ENCODE measurements at regions of chr7 and their contacts with region 1.

Region 1: DNA sequence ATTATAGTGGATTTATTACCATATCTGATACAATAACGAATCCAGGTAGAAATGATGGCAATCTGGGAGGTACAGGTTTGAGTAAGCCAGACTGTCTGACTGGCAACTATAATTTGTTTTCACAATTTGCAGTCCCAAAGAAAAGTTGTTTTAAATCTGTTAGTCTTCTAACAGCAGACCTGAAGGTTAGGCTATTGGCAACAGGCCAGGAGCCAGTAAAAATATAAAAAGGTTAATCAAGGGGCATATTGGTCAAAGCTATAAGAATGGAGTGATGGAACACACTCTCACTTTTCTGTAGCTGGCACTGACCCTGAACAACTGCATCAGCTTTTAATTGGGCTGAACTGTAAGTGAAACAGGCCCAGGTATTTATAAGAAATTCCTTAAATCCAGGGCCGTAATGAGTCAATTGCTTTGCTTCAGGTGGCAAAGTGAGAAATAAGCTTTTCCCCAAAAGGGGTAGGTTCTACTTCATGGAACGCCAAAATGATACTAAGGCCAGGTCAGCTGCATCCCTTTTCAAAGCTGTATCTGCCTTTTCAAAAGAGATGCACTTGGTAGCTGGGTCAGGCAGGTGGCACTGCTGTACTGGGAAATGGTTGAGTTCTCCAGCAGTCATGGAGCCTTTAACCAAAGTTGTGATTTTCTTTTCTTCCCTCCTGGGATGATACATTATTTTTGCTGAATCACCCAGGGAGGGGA is 7.0 kb upstream of the GPR22 start:
- DNase-seq: peak; percentile 8 to 32 (median 23)
- H3K4me3 ChIP-seq: no peak overlapping the region
- H3K4me3 Mint-ChIP-seq: no peak overlapping the region
- H3K27ac ChIP-seq: no peak overlapping the region
- H3K27ac Mint-ChIP-seq: no peak overlapping the region
- H3K4me1 ChIP-seq: no peaks in the 10 kb centered on the region
- H3K4me1 Mint-ChIP-seq: peaks cover 2% of the 10 kb centered on the region
- H3K27me3 ChIP-seq: no peaks in the 10 kb centered on the region
- H3K27me3 Mint-ChIP-seq: no peaks in the 10 kb centered on the region
- CTCF ChIP-seq: peak; percentile 46

Region 2: DNA sequence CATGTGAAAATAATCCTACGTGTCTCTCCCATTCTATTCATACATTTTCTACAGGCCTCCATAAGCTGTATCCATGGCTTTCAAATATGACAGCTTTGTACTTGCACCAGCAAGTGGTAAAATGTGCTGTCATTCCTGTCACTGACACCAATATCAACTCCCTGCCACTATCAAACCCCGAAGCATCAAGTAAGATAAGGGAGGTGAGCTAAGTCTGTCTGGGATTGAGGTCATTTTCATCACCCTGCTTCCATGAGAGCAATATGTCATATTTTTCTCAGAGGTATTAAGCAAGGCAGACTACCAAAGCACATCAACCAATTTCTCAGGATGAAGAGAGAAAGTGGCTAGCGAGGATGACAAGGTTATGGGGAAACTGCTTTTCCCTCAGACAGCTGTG is 18.0 kb after region 1 on chr7:
- intact Hi-C with region 1: no loop called
- DNase-seq: no peak
- H3K4me3 ChIP-seq: no peak overlapping the region
- H3K4me3 Mint-ChIP-seq: no peak overlapping the region
- H3K27ac ChIP-seq: no peak overlapping the region
- H3K27ac Mint-ChIP-seq: no peak overlapping the region
- H3K4me1 ChIP-seq: no peaks in the 10 kb centered on the region
- H3K4me1 Mint-ChIP-seq: peaks cover 3% of the 10 kb centered on the region
- H3K27me3 ChIP-seq: no peaks in the 10 kb centered on the region
- H3K27me3 Mint-ChIP-seq: no peaks in the 10 kb centered on the region
- CTCF ChIP-seq: no peak

Region 3: GRCh38 chr7:107725151-107725740 is 262.4 kb after region 1 on chr7:
- intact Hi-C with region 1: loop called in 1 of 2 experiments (anchors 5 kb)
- DNase-seq: peak; percentile 15 to 45 (median 37)
- H3K4me3 ChIP-seq: no peak overlapping the region
- H3K4me3 Mint-ChIP-seq: no peak overlapping the region
- H3K27ac ChIP-seq: no peak overlapping the region
- H3K27ac Mint-ChIP-seq: no peak overlapping the region
- H3K4me1 ChIP-seq: no peaks in the 10 kb centered on the region
- H3K4me1 Mint-ChIP-seq: no peaks in the 10 kb centered on the region
- H3K27me3 ChIP-seq: no peaks in the 10 kb centered on the region
- H3K27me3 Mint-ChIP-seq: peaks cover 0 to 12% (median 3%) of the 10 kb centered on the region in 3 donors
- CTCF ChIP-seq: peak; percentile 76

Region 4: DNA sequence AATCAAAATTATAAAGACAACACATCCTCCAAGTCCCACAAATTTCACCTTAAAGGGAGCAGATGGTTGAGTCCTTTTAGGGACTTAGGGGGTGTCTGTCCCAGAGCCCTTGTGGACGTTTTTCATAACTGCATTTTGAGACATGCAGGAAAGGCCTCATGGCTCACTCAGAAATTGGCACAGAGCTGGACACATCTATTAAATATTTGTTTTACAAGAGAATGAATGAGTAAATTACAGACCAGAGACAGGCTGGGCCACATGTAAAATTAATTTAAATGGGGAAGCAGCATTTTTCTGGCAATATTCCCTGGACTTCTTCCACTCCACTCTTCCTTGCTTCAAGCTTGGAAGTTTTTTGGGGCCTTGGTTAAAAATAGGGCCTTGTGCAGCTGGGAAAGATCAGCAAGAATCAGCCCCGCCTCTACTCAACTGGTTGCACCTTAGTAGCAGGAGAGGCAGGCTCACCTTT is 520.1 kb after region 1 on chr7:
- intact Hi-C with region 1: no loop called
- DNase-seq: no peak
- H3K4me3 ChIP-seq: no peak overlapping the region
- H3K4me3 Mint-ChIP-seq: no peak overlapping the region
- H3K27ac ChIP-seq: no peak overlapping the region
- H3K27ac Mint-ChIP-seq: no peak overlapping the region
- H3K4me1 ChIP-seq: no peaks in the 10 kb centered on the region
- H3K4me1 Mint-ChIP-seq: no peaks in the 10 kb centered on the region
- H3K27me3 ChIP-seq: no peaks in the 10 kb centered on the region
- H3K27me3 Mint-ChIP-seq: no peaks in the 10 kb centered on the region
- CTCF ChIP-seq: peak; percentile 15

Measured in CD14-positive monocyte (primary cell).